ENCODE measurements at regions of chr6 and their contacts with region 1.

Region 1: DNA sequence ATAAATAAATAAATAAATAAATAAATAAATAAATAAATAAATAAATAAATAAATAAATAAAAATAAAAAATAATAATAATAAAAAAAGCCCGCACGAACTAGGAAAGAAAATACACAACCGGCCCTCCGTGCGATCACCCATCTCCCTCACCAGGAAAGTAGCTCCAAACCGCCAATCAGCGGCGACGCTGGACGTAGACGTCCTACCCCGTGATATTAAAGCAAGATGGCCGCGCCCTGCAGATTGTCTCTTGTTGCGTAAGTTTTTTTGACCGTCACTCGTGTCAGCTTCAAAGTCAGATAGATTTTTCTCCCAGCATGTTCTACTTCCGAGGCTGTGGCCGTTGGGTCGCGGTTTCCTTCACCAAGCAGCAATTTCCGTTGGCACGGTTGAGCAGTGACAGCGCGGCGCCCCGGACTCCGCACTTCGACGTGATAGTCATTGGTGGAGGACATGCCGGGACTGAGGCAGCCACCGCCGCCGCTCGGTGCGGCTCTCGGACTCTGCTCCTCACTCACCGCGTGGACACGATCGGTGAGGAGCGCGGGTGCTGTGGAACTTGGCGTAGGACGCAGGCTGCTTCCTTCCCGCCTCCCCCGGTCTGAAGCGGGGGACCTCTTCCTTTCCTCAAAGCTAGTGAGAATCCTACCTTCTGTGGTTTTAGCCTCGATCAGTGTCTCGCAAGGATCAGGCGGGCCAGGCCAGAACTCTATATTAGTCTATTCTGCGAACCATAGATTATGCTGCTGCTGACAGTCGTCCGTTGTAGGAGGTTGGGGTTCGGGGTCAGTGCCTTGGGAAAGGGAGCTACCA is at the start of gene MTO1:
- DNase-seq: peak; percentile 90
- H3K4me3 Mint-ChIP-seq: peak within 1 kb of the TSS; percentile 88
- H3K27ac Mint-ChIP-seq: peak within 1 kb of the TSS; percentile 96
- H3K4me1 Mint-ChIP-seq: peaks cover 60% of the 10 kb centered on the region
- H3K27me3 Mint-ChIP-seq: no peaks in the 10 kb centered on the region
- total RNA-seq, gene MTO1: 62.1 to 66.4 TPM

Region 2: GRCh38 chr6:73388800-73389512 is 72.8 kb before region 1 on chr6:
- CTCF ChIA-PET with region 1: interaction called, 13 read pairs
- POLR2A ChIA-PET with region 1: interaction called, 50 read pairs
- DNase-seq: peak; percentile 84
- H3K4me3 Mint-ChIP-seq: peak overlapping the region; percentile 80
- H3K27ac Mint-ChIP-seq: peak overlapping the region; percentile 89
- H3K4me1 Mint-ChIP-seq: peaks cover 37% of the 10 kb centered on the region
- H3K27me3 Mint-ChIP-seq: no peaks in the 10 kb centered on the region

Region 3: GRCh38 chr6:73443555-73443954 is 18.2 kb before region 1 on chr6:
- CTCF ChIA-PET with region 1: interaction called, 4 read pairs
- POLR2A ChIA-PET with region 1: interaction called, 14 read pairs
- DNase-seq: no peak
- H3K4me3 Mint-ChIP-seq: no peak overlapping the region
- H3K27ac Mint-ChIP-seq: no peak overlapping the region
- H3K4me1 Mint-ChIP-seq: peaks cover 65% of the 10 kb centered on the region
- H3K27me3 Mint-ChIP-seq: no peaks in the 10 kb centered on the region

Region 4: DNA sequence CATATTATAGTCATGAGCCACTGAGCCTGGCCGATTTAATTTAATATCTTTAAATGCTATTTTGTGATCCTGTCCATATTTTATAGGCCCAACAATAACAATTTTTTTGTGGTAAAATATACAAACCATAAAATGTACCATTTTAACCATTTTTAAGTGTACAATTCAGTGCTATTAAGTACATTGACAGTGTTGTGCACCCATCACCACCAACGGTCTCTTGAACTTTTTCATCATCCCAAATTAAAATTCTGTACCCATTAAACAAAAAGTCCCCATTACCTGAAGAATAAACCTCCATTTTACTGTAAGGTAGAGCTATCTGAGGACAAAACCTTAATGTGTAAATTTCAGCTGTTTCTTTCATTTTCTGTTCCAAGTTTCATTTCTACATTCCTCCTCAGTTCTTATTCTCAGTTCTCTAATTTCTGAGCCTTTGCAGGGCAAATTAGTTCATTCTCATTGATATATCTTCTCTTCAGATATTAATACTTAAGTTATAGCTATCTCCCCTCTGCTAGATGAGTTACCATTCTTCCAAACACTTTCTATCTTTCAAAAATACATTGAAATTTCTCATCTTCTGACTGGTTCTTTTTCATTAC is 10.0 kb after region 1 on chr6:
- CTCF ChIA-PET with region 1: interaction called, 11 read pairs
- POLR2A ChIA-PET with region 1: interaction called, 69 read pairs
- DNase-seq: no peak
- H3K4me3 Mint-ChIP-seq: peak overlapping the region; percentile 73
- H3K27ac Mint-ChIP-seq: peak overlapping the region; percentile 88
- H3K4me1 Mint-ChIP-seq: peaks cover 30% of the 10 kb centered on the region
- H3K27me3 Mint-ChIP-seq: no peaks in the 10 kb centered on the region

Region 5: GRCh38 chr6:73520688-73521350 is 59.1 kb after region 1 on chr6 and contains the start of gene EEF1A1:
- CTCF ChIA-PET with region 1: interaction called, 12 read pairs
- POLR2A ChIA-PET with region 1: interaction called, 172 read pairs
- DNase-seq: peak; percentile 100
- H3K4me3 Mint-ChIP-seq: peak within 1 kb of the TSS; percentile 89
- H3K27ac Mint-ChIP-seq: peak within 1 kb of the TSS; percentile 97
- H3K4me1 Mint-ChIP-seq: peaks cover 48% of the 10 kb centered on the region
- H3K27me3 Mint-ChIP-seq: no peaks in the 10 kb centered on the region
- total RNA-seq, gene EEF1A1: 7,440 to 7,455 TPM

Measured in activated CD4-positive, alpha-beta memory T cell treated with anti-CD3 and anti-CD28 coated beads, Interleukin-2, amount 10 ng/mL, durations not matched to agents 7 days and 5 days (primary cell).